ENCODE measurements at regions of chr14 and their contacts with region 1.

Region 1: DNA sequence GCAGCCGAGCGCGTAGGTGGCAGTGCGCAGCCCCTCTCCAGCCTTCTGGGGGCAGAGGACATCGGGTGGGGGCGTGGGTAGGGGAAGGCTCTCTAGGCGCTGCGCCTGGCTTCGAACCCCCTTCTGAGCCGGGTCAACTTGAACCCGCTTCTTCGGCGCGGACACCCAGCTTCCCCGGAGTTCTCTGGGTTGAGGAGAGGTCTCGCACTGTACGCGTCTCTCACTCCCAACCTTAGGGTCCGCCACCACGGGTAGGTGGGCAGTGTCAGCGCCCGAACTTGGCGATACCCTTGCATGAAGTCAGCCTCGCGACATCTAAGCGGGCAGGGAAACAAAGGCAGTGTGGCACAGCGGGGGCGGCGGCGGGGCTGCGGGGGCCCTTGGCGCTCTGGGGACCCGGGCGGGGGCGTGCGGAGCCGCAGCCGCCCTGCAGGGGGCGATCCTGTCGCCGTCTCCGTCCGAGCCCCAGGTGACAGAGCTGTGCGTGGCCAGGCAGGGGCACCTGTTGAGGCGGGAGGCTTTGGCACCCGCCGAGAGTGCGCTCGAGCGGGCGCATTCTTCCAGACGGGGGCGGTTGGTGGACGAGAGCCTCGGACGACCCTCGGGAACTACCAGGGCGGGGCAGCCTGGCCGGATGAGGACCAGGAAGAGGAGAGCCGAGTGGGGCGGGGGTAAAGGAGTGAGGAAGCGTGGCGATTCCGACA is 1.1 kb downstream of the GALNT16 start:
- DNase-seq: peak; percentile 43 to 72
- ATAC-seq: peak; percentile 63 to 81
- H3K4me3 ChIP-seq: peak overlapping the region; percentile 62
- H3K27ac ChIP-seq: peak overlapping the region in 1 of 2 experiments; percentile 79; a peak in 4 of 6 replicates
- H3K4me1 ChIP-seq: peaks cover 3% of the 10 kb centered on the region; the same call in 1 of the 3 replicates
- CTCF ChIP-seq: peak; percentile 68
- EP300 ChIP-seq: no peak
- POLR2A ChIP-seq: no peak
- RAD21 ChIP-seq: peak; percentile 33 to 64; a peak in 4 of 5 replicates

Region 2: GRCh38 chr14:69247676-69248440 is 13.2 kb before region 1 on chr14:
- CTCF ChIA-PET with region 1: interaction called, 53 read pairs
- POLR2A ChIA-PET with region 1: no interaction called
- DNase-seq: no peak
- ATAC-seq: peak in 1 of 2 experiments; percentile 41; a peak in 1 of 6 replicates
- H3K4me3 ChIP-seq: no peak overlapping the region
- H3K27ac ChIP-seq: no peak overlapping the region
- H3K4me1 ChIP-seq: no peaks in the 10 kb centered on the region; the same call in 2 of the 3 replicates
- CTCF ChIP-seq: no peak; the same call in 2 of the 3 replicates
- EP300 ChIP-seq: no peak
- POLR2A ChIP-seq: no peak
- RAD21 ChIP-seq: no peak

Region 3: GRCh38 chr14:69270795-69271708 is 10.0 kb after region 1 on chr14:
- CTCF ChIA-PET with region 1: interaction called, 45 read pairs
- POLR2A ChIA-PET with region 1: no interaction called
- DNase-seq: no peak
- ATAC-seq: peak in 1 of 2 experiments; percentile 61; a peak in 4 of 6 replicates
- H3K4me3 ChIP-seq: no peak overlapping the region
- H3K27ac ChIP-seq: no peak overlapping the region
- H3K4me1 ChIP-seq: no peaks in the 10 kb centered on the region
- CTCF ChIP-seq: no peak
- EP300 ChIP-seq: no peak
- POLR2A ChIP-seq: no peak
- RAD21 ChIP-seq: no peak

Region 4: GRCh38 chr14:69281450-69282169 is 20.6 kb after region 1 on chr14:
- CTCF ChIA-PET with region 1: interaction called, 45 read pairs
- POLR2A ChIA-PET with region 1: no interaction called
- DNase-seq: no peak
- ATAC-seq: peak; percentile 27 to 32; a peak in 2 of 6 replicates
- H3K4me3 ChIP-seq: no peak overlapping the region
- H3K27ac ChIP-seq: no peak overlapping the region
- H3K4me1 ChIP-seq: no peaks in the 10 kb centered on the region
- CTCF ChIP-seq: no peak
- EP300 ChIP-seq: no peak
- POLR2A ChIP-seq: no peak
- RAD21 ChIP-seq: no peak

Region 5: GRCh38 chr14:69460093-69460701 is 199.2 kb after region 1 on chr14:
- CTCF ChIA-PET with region 1: interaction called, 25 read pairs
- POLR2A ChIA-PET with region 1: no interaction called
- DNase-seq: peak; percentile 79 to 85
- ATAC-seq: peak; percentile 98
- H3K4me3 ChIP-seq: no peak overlapping the region
- H3K27ac ChIP-seq: no peak overlapping the region
- H3K4me1 ChIP-seq: no peaks in the 10 kb centered on the region
- CTCF ChIP-seq: peak; percentile 84
- EP300 ChIP-seq: no peak
- POLR2A ChIP-seq: no peak
- RAD21 ChIP-seq: peak; percentile 75 to 80

Measured in A549 (cell line).